CD4-positive, alpha-beta T cell (primary cell): ENCODE measurements at regions of chr6 and their contacts with region 1.

Region 1: DNA sequence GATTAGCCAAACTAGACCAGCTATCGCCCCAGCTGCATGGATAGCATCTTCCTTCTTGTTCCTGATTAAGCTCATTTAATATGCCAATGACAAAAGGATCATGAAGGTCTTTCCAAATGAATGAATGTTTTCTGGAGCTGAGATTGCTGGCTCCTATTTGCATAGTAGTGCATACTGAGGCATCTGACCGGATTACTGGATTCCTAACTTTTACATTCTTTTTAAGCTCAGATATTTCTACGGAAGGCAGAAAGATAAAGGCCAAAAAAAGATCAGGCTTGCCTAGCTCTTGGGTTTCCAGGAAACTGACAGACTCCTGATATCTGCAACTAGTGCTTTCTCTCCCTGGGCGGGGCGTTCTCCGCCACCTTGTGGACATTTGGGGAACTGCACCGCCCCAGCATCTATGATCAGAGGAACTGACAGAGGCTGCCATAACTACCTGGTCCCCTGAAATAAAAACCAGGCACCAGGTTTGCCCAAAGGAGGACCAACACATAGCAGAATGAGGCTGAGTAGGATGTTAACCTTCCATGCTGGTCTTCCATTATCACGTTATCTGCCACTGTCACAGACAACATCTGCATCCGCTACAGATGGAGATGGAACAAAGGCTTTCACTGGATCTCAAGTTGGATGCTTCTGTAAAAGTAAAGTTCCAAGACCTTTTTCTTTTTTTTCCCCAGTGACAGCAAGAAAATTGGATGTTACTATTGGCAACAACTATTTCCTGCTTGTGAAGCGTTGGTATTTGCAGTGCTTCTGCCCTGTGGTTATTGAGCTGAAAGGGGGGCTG is 33.2 kb downstream of the NT5E start:
- DNase-seq: peak; percentile 54 to 80 (median 72)
- ATAC-seq: peak; percentile 89
- H3K4me3 ChIP-seq: no peak overlapping the region
- H3K4me3 Mint-ChIP-seq: no peak overlapping the region
- H3K27ac ChIP-seq: no peak overlapping the region
- H3K27ac Mint-ChIP-seq: no peak overlapping the region
- H3K4me1 ChIP-seq: peaks cover 6% of the 10 kb centered on the region
- H3K4me1 Mint-ChIP-seq: peaks cover 7% of the 10 kb centered on the region
- H3K27me3 ChIP-seq: no peaks in the 10 kb centered on the region
- H3K27me3 Mint-ChIP-seq: no peaks in the 10 kb centered on the region
- CTCF ChIP-seq: peak; percentile 99

Region 2: GRCh38 chr6:83884523-83884922 is 1598.6 kb before region 1 on chr6:
- CTCF ChIA-PET with region 1: no interaction called
- POLR2A ChIA-PET with region 1: no interaction called
- intact Hi-C with region 1: loop called in 1 of 2 experiments (anchors 5 kb)
- DNase-seq: peak in 3 of 14 experiments; percentile 63 to 65 (median 65)
- ATAC-seq: peak; percentile 74
- H3K4me3 ChIP-seq: no peak overlapping the region
- H3K4me3 Mint-ChIP-seq: no peak overlapping the region
- H3K27ac ChIP-seq: no peak overlapping the region
- H3K27ac Mint-ChIP-seq: no peak overlapping the region
- H3K4me1 ChIP-seq: no peaks in the 10 kb centered on the region
- H3K4me1 Mint-ChIP-seq: peaks cover 25% of the 10 kb centered on the region
- H3K27me3 ChIP-seq: no peaks in the 10 kb centered on the region
- H3K27me3 Mint-ChIP-seq: no peaks in the 10 kb centered on the region
- CTCF ChIP-seq: peak; percentile 87

Region 3: GRCh38 chr6:85354761-85355618 is 128.1 kb before region 1 on chr6:
- CTCF ChIA-PET with region 1: interaction called, 4 read pairs
- POLR2A ChIA-PET with region 1: no interaction called
- intact Hi-C with region 1: loop called (anchors 1 kb)
- DNase-seq: peak; percentile 12 to 64 (median 35)
- ATAC-seq: peak; percentile 49
- H3K4me3 ChIP-seq: no peak overlapping the region
- H3K4me3 Mint-ChIP-seq: no peak overlapping the region
- H3K27ac ChIP-seq: no peak overlapping the region
- H3K27ac Mint-ChIP-seq: no peak overlapping the region
- H3K4me1 ChIP-seq: no peaks in the 10 kb centered on the region
- H3K4me1 Mint-ChIP-seq: no peaks in the 10 kb centered on the region
- H3K27me3 ChIP-seq: no peaks in the 10 kb centered on the region
- H3K27me3 Mint-ChIP-seq: no peaks in the 10 kb centered on the region
- CTCF ChIP-seq: peak; percentile 96

Region 4: DNA sequence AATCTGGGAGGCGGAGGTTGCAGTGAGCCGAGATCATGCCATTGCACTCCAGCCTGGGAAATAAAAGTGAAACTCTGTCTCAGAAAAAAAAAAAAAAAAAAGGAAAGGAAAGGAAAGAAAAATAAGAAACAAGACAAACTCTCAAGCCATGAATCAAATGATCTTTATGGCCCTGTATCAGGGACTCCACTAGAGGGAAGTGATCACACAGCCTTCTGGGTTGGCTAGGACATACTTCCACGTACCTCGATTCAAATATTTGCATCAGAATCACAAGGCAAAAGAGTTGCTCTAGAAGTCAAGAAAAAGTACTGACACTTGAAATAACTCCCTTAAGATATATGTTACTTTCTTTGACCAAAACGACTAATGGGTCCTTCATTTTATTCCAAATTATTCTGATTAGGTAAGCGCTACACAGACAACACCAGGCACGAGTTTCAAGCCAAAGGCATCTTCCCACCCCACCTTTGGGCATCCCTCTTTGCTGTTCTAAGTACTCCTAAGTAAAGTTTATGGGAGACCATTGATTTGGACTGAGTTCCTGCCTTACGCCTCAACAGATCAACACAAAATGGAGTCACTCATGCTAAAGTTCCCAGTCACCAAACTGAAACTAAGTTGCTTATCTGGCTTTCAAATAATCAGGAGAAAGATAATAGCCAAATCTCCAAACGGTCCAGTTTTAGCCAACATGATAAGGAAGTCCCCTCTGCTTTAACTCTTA is 110.8 kb before region 1 on chr6:
- CTCF ChIA-PET with region 1: no interaction called
- POLR2A ChIA-PET with region 1: no interaction called
- intact Hi-C with region 1: loop called in 1 of 2 experiments (anchors 5 kb)
- DNase-seq: no peak
- ATAC-seq: no peak
- H3K4me3 ChIP-seq: no peak overlapping the region
- H3K4me3 Mint-ChIP-seq: no peak overlapping the region
- H3K27ac ChIP-seq: no peak overlapping the region
- H3K27ac Mint-ChIP-seq: no peak overlapping the region
- H3K4me1 ChIP-seq: no peaks in the 10 kb centered on the region
- H3K4me1 Mint-ChIP-seq: no peaks in the 10 kb centered on the region
- H3K27me3 ChIP-seq: no peaks in the 10 kb centered on the region
- H3K27me3 Mint-ChIP-seq: peaks cover 13% of the 10 kb centered on the region
- CTCF ChIP-seq: no peak

Region 5: GRCh38 chr6:85449818-85450759 is 33.0 kb before region 1 on chr6 and contains the start of gene NT5E:
- CTCF ChIA-PET with region 1: interaction called, 3 read pairs
- POLR2A ChIA-PET with region 1: interaction called, 16 read pairs
- intact Hi-C with region 1: loop called in 1 of 2 experiments (anchors 2 kb)
- DNase-seq: peak in 6 of 14 experiments; percentile 7 to 62 (median 30)
- ATAC-seq: peak; percentile 54
- H3K4me3 ChIP-seq: peak within 1 kb of the TSS; percentile 51
- H3K4me3 Mint-ChIP-seq: peak within 1 kb of the TSS; percentile 96
- H3K27ac ChIP-seq: no peak within 1 kb of the TSS
- H3K27ac Mint-ChIP-seq: peak within 1 kb of the TSS; percentile 78
- H3K4me1 ChIP-seq: peaks cover 26% of the 10 kb centered on the region
- H3K4me1 Mint-ChIP-seq: peaks cover 55% of the 10 kb centered on the region
- H3K27me3 ChIP-seq: peaks cover 19 to 37% of the 10 kb centered on the region in 2 experiments
- H3K27me3 Mint-ChIP-seq: peaks cover 73% of the 10 kb centered on the region
- CTCF ChIP-seq: no peak
- total RNA-seq, gene NT5E: 2.7 to 3.3 TPM